CD4-positive, alpha-beta memory T cell (primary cell): ENCODE measurements at regions of chr16 and their contacts with region 1.

Region 1: GRCh38 chr16:50806099-50807062 is 64.5 kb downstream of the CYLD start:
- DNase-seq: peak; percentile 89 to 91 (median 90)
- H3K4me3 ChIP-seq: peak overlapping the region; percentile 23 to 39
- H3K4me3 Mint-ChIP-seq: peak overlapping the region; percentile 72 to 89 (median 82)
- H3K27ac ChIP-seq: no peak overlapping the region
- H3K27ac Mint-ChIP-seq: peak overlapping the region; percentile 81 to 95 (median 90)
- H3K4me1 ChIP-seq: peaks cover 8% of the 10 kb centered on the region
- H3K4me1 Mint-ChIP-seq: peaks cover 10 to 22% (median 16%) of the 10 kb centered on the region in 4 donors
- H3K27me3 ChIP-seq: no peaks in the 10 kb centered on the region
- H3K27me3 Mint-ChIP-seq: peaks cover 0 to 2% of the 10 kb centered on the region in 2 donors

Region 2: GRCh38 chr16:50024684-50025536 is 781.5 kb before region 1 on chr16 and contains the start of gene CNEP1R1:
- CTCF ChIA-PET with region 1: interaction called, 43 read pairs
- POLR2A ChIA-PET with region 1: interaction called, 11 read pairs
- intact Hi-C with region 1: loop called (anchors 1 kb)
- DNase-seq: peak; percentile 93 to 97 (median 95)
- H3K4me3 ChIP-seq: peak within 1 kb of the TSS; percentile 76 to 85
- H3K4me3 Mint-ChIP-seq: peak within 1 kb of the TSS; percentile 94 to 99 (median 96)
- H3K27ac ChIP-seq: peak within 1 kb of the TSS; percentile 75
- H3K27ac Mint-ChIP-seq: peak within 1 kb of the TSS; percentile 91 to 99 (median 96)
- H3K4me1 ChIP-seq: peaks cover 34% of the 10 kb centered on the region
- H3K4me1 Mint-ChIP-seq: peaks cover 18 to 32% (median 24%) of the 10 kb centered on the region in 4 donors
- H3K27me3 ChIP-seq: no peaks in the 10 kb centered on the region
- H3K27me3 Mint-ChIP-seq: peaks cover 0 to 4% of the 10 kb centered on the region in 2 donors
- total RNA-seq, gene CNEP1R1: 34.2 to 40.8 TPM

Region 3: GRCh38 chr16:50273681-50274325 is 532.6 kb before region 1 on chr16:
- CTCF ChIA-PET with region 1: interaction called, 10 read pairs
- POLR2A ChIA-PET with region 1: no interaction called
- intact Hi-C with region 1: no loop called
- DNase-seq: peak; percentile 24 to 69 (median 35)
- H3K4me3 ChIP-seq: peak overlapping the region; percentile 77 to 90
- H3K4me3 Mint-ChIP-seq: peak overlapping the region; percentile 90 to 98 (median 92)
- H3K27ac ChIP-seq: peak overlapping the region; percentile 71
- H3K27ac Mint-ChIP-seq: peak overlapping the region; percentile 96 to 99 (median 98)
- H3K4me1 ChIP-seq: peaks cover 98% of the 10 kb centered on the region
- H3K4me1 Mint-ChIP-seq: peaks cover 59 to 100% (median 89%) of the 10 kb centered on the region in 4 donors
- H3K27me3 ChIP-seq: no peaks in the 10 kb centered on the region
- H3K27me3 Mint-ChIP-seq: no peaks in the 10 kb centered on the region

Region 4: DNA sequence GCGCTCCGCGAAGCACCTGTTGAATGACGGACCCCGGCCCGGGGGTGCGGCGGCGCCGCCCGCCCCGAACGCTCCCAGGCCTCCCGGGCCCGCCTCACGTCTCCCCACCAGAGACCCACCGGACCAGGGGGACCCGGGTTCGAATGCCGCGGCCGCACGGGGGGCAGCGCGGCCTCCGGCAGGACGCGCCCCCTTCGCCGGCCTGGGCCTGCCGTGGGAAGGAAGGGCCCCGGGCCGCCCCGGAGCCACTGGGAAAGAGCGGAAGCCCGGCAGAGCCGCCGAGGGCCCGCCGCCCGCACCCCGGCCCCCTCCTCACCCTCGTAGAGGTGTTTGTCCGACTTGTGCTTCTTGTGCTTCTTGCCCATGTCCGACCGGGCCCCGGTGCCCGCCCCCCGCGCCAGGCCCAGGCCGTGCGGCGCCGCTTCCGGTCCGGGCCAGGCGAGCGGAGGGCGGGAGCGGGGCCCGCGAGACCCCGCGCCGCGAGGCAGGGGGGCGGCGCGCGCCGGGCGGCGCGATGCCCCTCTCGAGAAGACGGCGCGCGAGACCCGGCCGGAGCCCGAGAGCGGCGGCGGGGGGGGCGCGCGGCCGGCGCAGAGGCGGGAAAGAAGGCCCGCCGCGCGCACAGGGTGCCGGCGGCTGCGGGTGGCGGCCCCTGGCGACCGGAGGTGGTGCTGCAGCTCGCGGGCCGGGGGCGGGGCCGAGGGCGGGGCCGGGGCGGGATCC is 437.8 kb before region 1 on chr16 and contains the start of gene BRD7:
- CTCF ChIA-PET with region 1: interaction called, 10 read pairs
- POLR2A ChIA-PET with region 1: no interaction called
- intact Hi-C with region 1: loop called (anchors 1 kb)
- DNase-seq: peak; percentile 58 to 77 (median 66)
- H3K4me3 ChIP-seq: peak within 1 kb of the TSS; percentile 57 to 59
- H3K4me3 Mint-ChIP-seq: peak within 1 kb of the TSS; percentile 89 to 96 (median 92)
- H3K27ac ChIP-seq: peak within 1 kb of the TSS; percentile 70
- H3K27ac Mint-ChIP-seq: peak within 1 kb of the TSS; percentile 83 to 99 (median 96)
- H3K4me1 ChIP-seq: peaks cover 53% of the 10 kb centered on the region
- H3K4me1 Mint-ChIP-seq: peaks cover 38 to 58% (median 46%) of the 10 kb centered on the region in 4 donors
- H3K27me3 ChIP-seq: no peaks in the 10 kb centered on the region
- H3K27me3 Mint-ChIP-seq: peaks cover 0 to 1% of the 10 kb centered on the region in 2 donors
- total RNA-seq, gene BRD7: 86.6 to 97.7 TPM

Region 5: GRCh38 chr16:50671644-50672260 is 134.6 kb before region 1 on chr16:
- CTCF ChIA-PET with region 1: interaction called, 458 read pairs
- POLR2A ChIA-PET with region 1: interaction called, 40 read pairs
- intact Hi-C with region 1: loop called (anchors 1 kb)
- DNase-seq: peak; percentile 45 to 56 (median 49)
- H3K4me3 ChIP-seq: no peak overlapping the region
- H3K4me3 Mint-ChIP-seq: peak overlapping the region in 2 of 8 donors; percentile 1 to 47
- H3K27ac ChIP-seq: no peak overlapping the region
- H3K27ac Mint-ChIP-seq: peak overlapping the region in 6 of 7 donors; percentile 39 to 96 (median 68)
- H3K4me1 ChIP-seq: peaks cover 31% of the 10 kb centered on the region
- H3K4me1 Mint-ChIP-seq: peaks cover 21 to 39% (median 29%) of the 10 kb centered on the region in 4 donors
- H3K27me3 ChIP-seq: no peaks in the 10 kb centered on the region
- H3K27me3 Mint-ChIP-seq: no peaks in the 10 kb centered on the region

Region 6: DNA sequence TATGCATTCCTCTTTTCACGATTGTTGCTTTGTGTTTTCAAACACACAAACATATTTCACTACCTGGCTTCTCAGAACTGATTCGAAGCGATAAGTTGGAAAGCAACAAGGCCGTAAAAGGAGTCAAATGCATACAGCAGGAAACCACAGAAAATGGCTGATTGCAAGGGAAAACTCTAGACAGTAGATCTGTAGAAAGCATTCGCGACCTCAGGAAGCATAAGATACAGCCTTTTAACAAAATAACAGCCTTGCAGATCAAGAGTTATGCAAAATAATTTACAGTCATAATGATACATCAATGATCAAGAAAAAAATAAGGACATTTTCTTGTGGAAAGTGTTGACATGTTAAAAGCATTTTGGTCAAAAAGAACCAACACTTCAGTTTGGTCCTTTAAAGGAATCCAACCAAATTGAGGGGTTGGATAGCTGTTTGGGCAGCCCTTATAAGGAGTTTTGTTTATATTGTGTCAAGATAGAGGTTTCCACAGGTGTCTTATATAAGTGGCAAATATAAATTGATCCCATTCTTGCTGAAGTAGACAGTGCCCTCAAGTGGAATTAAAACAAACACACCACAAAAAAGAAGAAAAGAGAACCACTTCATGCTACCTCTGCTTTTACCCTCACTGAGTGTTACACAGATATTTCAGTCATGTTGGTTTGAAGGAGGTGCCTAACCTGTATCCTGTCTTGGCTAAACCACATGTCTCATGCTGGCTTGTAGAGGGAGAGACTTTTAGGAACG is 59.0 kb before region 1 on chr16:
- CTCF ChIA-PET with region 1: interaction called, 82 read pairs
- POLR2A ChIA-PET with region 1: interaction called, 28 read pairs
- intact Hi-C with region 1: loop called (anchors 1 kb)
- DNase-seq: peak; percentile 64 to 75 (median 70)
- H3K4me3 ChIP-seq: peak overlapping the region; percentile 26 to 48
- H3K4me3 Mint-ChIP-seq: peak overlapping the region; percentile 83 to 96 (median 90)
- H3K27ac ChIP-seq: peak overlapping the region; percentile 59
- H3K27ac Mint-ChIP-seq: peak overlapping the region; percentile 95 to 99 (median 97)
- H3K4me1 ChIP-seq: peaks cover 77% of the 10 kb centered on the region
- H3K4me1 Mint-ChIP-seq: peaks cover 37 to 83% (median 55%) of the 10 kb centered on the region in 4 donors
- H3K27me3 ChIP-seq: no peaks in the 10 kb centered on the region
- H3K27me3 Mint-ChIP-seq: no peaks in the 10 kb centered on the region

Region 7: GRCh38 chr16:50781043-50781442 is 25.3 kb before region 1 on chr16:
- CTCF ChIA-PET with region 1: interaction called, 66 read pairs
- POLR2A ChIA-PET with region 1: interaction called, 8 read pairs
- intact Hi-C with region 1: no loop called
- DNase-seq: peak in 4 of 5 donors; percentile 33 to 59 (median 49)
- H3K4me3 ChIP-seq: no peak overlapping the region
- H3K4me3 Mint-ChIP-seq: peak overlapping the region; percentile 40 to 86 (median 77)
- H3K27ac ChIP-seq: peak overlapping the region; percentile 32
- H3K27ac Mint-ChIP-seq: peak overlapping the region; percentile 88 to 98 (median 95)
- H3K4me1 ChIP-seq: peaks cover 63% of the 10 kb centered on the region
- H3K4me1 Mint-ChIP-seq: peaks cover 40 to 74% (median 53%) of the 10 kb centered on the region in 4 donors
- H3K27me3 ChIP-seq: no peaks in the 10 kb centered on the region
- H3K27me3 Mint-ChIP-seq: no peaks in the 10 kb centered on the region

Region 8: GRCh38 chr16:50925758-50926357 is 119.5 kb after region 1 on chr16:
- CTCF ChIA-PET with region 1: no interaction called
- POLR2A ChIA-PET with region 1: no interaction called
- intact Hi-C with region 1: no loop called
- DNase-seq: no peak
- H3K4me3 ChIP-seq: no peak overlapping the region
- H3K4me3 Mint-ChIP-seq: no peak overlapping the region
- H3K27ac ChIP-seq: no peak overlapping the region
- H3K27ac Mint-ChIP-seq: no peak overlapping the region
- H3K4me1 ChIP-seq: no peaks in the 10 kb centered on the region
- H3K4me1 Mint-ChIP-seq: no peaks in the 10 kb centered on the region
- H3K27me3 ChIP-seq: no peaks in the 10 kb centered on the region
- H3K27me3 Mint-ChIP-seq: peaks cover 17 to 27% of the 10 kb centered on the region in 2 donors